GM10248 (cell line): ENCODE measurements at regions of chr9 and their contacts with region 1.

Region 1: DNA sequence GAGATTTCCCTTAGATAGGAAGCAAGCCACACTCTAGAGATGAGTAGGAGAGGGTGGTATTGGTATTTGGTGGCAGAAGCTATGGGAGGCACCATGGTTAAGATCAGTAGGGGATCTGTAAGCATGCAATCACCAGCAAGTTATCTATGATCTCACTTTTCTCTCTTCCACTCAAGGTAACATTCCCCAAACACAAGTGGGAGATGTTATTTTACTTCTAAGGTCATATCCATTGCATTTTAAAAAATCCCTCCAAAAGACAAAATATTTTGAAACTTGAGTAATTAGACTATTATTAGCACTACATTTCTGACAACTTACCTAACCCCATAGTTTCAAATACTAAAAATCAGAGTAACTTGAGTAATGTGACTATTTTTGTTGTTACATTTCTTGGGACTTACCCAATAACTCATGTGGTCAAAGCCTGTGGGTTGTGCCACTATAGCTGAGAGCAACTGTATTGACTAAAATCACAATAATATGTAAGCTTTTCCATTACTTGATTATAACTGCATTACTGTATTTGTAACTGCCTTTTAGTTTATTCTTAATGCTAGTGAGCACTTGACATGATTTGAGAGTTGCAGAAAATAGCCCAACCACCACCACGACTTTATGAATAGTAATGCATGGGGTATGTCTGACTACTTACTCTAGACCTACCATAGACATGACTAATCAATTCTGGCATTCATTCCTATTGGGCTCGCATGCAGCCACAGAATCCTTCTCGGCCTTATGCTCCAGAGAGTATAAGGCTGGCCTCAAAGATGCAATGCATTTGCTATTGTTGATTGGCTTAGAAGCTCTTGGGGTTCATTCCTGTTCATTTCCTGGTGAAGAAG is 264.7 kb downstream of the TRIM32 start:
- DNase-seq: peak; percentile 33
- CTCF ChIP-seq: no peak

Region 2: DNA sequence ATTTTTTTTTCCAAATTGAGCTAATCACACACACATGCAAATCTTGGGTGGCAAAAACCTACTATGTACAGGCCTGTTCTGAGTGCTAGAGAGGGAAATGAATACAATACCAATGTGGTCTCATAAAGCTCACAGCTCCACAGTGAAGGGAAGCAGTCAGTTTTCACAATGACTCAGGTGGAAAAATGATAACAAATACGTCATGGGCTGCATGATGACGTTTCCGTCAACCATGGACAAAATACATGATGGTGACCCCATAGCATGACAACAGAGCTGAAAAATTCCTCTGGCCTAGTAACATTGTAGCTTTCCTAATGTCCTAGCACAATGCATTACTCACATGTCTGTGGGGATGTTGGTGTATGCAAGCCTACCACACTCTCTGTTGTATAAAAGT is 12.2 kb before region 1 on chr9:
- CTCF ChIA-PET with region 1: interaction called, 18 read pairs
- POLR2A ChIA-PET with region 1: interaction called, 5 read pairs
- DNase-seq: no peak
- CTCF ChIP-seq: no peak

Region 3: GRCh38 chr9:116966199-116966598 is 14.4 kb after region 1 on chr9:
- CTCF ChIA-PET with region 1: interaction called, 27 read pairs
- POLR2A ChIA-PET with region 1: no interaction called
- DNase-seq: no peak
- CTCF ChIP-seq: no peak

Region 4: GRCh38 chr9:116975119-116975518 is 23.3 kb after region 1 on chr9:
- CTCF ChIA-PET with region 1: interaction called, 11 read pairs
- POLR2A ChIA-PET with region 1: no interaction called
- DNase-seq: no peak
- CTCF ChIP-seq: no peak